IMR-90 (cell line): ENCODE measurements at regions of chr17 and their contacts with region 1.

Region 1: DNA sequence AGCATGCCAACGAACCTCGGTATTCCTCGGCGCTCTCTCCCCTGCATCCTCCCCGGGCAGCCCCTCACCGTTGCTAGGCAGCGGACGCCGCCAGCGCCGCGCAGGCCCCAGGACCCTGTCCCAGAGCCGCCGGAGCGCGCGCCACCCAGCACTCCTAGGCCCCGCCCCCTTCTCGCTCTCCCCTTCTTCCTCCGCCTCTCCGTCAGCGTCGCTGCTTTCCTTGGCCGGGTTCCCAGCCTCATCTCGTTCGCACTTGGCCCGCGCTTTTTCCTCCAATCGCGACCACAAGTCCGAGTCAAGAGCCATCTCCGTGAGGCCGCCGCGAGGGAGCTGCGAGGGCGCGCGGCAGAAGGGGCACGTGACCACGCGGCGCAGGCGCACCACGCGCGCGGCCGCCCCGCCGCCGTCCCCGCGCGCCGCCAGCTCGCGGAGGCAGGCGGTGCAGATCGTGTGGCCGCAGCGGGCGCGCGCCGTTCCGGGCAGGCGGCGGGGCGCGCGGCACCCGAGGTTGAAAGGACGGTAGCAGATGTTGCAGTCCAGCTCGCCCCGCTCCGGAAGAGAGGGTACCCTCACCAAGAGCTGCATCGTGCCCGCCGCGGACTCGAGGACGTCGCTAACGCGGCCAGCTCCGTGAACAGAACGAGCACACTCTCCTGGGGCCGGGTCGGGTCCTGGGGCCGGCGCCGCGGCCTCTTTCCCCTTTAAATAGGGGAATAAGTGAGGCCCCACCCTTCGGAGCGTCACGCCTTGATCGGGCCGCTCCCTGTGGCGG is at the start of gene RNF227:
- DNase-seq: peak; percentile 96
- ATAC-seq: peak; percentile 84
- H3K4me3 ChIP-seq: peak within 1 kb of the TSS; percentile 61
- H3K27ac ChIP-seq: peak within 1 kb of the TSS; percentile 90
- H3K4me1 ChIP-seq: peaks cover 12% of the 10 kb centered on the region
- H3K27me3 ChIP-seq: no peaks in the 10 kb centered on the region
- CTCF ChIP-seq: no peak
- POLR2A ChIP-seq: peak; percentile 71
- RAD21 ChIP-seq: no peak
- total RNA-seq, gene RNF227: 1.3 and 1.4 TPM in 2 replicates

Region 2: DNA sequence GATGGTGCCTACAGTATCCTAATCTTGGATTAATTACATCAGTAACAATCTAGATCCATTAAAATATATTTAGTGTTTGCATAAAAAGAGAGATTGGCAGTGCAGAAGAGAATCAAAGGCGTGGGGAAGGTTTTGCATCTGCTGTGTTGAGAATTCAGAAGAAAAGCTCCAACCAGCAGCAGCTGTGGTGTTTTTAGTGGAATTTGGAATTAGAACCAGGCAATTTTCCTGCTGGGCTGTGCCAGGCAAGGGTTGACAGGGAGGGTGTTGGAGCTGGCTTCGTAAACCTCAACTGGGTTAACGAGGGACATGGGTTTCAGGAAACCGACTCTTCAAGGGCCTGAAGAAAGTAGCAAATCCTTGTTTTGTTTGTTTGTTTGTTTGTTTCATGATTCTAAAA is 1953.4 kb before region 1 on chr17:
- CTCF ChIA-PET with region 1: no interaction called
- POLR2A ChIA-PET with region 1: no interaction called
- dilution Hi-C with region 1: no loop called
- in situ Hi-C with region 1: no loop called
- intact Hi-C with region 1: no loop called
- DNase-seq: no peak
- ATAC-seq: no peak
- H3K4me3 ChIP-seq: no peak overlapping the region
- H3K27ac ChIP-seq: no peak overlapping the region
- H3K4me1 ChIP-seq: no peaks in the 10 kb centered on the region
- H3K27me3 ChIP-seq: no peaks in the 10 kb centered on the region
- CTCF ChIP-seq: no peak
- POLR2A ChIP-seq: no peak
- RAD21 ChIP-seq: no peak

Region 3: GRCh38 chr17:7814969-7815368 is 100.8 kb before region 1 on chr17:
- CTCF ChIA-PET with region 1: no interaction called
- POLR2A ChIA-PET with region 1: no interaction called
- dilution Hi-C with region 1: no loop called
- in situ Hi-C with region 1: no loop called
- intact Hi-C with region 1: no loop called
- DNase-seq: no peak
- ATAC-seq: no peak
- H3K4me3 ChIP-seq: no peak overlapping the region
- H3K27ac ChIP-seq: no peak overlapping the region
- H3K4me1 ChIP-seq: no peaks in the 10 kb centered on the region
- H3K27me3 ChIP-seq: peaks cover 36% of the 10 kb centered on the region
- CTCF ChIP-seq: no peak
- POLR2A ChIP-seq: no peak
- RAD21 ChIP-seq: no peak

Region 4: GRCh38 chr17:7931709-7932482 is 16.1 kb after region 1 on chr17 and contains the starts of genes CNTROB and TRAPPC1:
- CTCF ChIA-PET with region 1: interaction called, 3 read pairs
- POLR2A ChIA-PET with region 1: interaction called, 7 read pairs
- dilution Hi-C with region 1: no loop called
- in situ Hi-C with region 1: no loop called
- intact Hi-C with region 1: loop called (anchors 1 kb)
- DNase-seq: peak; percentile 99
- ATAC-seq: peak; percentile 96
- H3K4me3 ChIP-seq: peak within 1 kb of the TSS; percentile 88
- H3K27ac ChIP-seq: peak within 1 kb of the TSS; percentile 90
- H3K4me1 ChIP-seq: peaks cover 7% of the 10 kb centered on the region; the same call in 1 of the 2 replicates
- H3K27me3 ChIP-seq: no peaks in the 10 kb centered on the region
- CTCF ChIP-seq: no peak
- POLR2A ChIP-seq: peak; percentile 77; the same call in 1 of the 2 replicates
- RAD21 ChIP-seq: no peak
- total RNA-seq, gene CNTROB: 12.5 and 12.7 TPM in 2 replicates
- total RNA-seq, gene TRAPPC1: 31.4 and 50.4 TPM in 2 replicates

Region 5: GRCh38 chr17:8041249-8041928 is 125.6 kb after region 1 on chr17:
- CTCF ChIA-PET with region 1: interaction called, 8 read pairs
- POLR2A ChIA-PET with region 1: no interaction called
- dilution Hi-C with region 1: no loop called
- in situ Hi-C with region 1: loop called (anchors 10 kb)
- intact Hi-C with region 1: loop called (anchors 1 kb)
- DNase-seq: peak; percentile 73
- ATAC-seq: peak; percentile 84
- H3K4me3 ChIP-seq: no peak overlapping the region
- H3K27ac ChIP-seq: no peak overlapping the region
- H3K4me1 ChIP-seq: no peaks in the 10 kb centered on the region
- H3K27me3 ChIP-seq: peaks cover 47% of the 10 kb centered on the region
- CTCF ChIP-seq: peak; percentile 73
- POLR2A ChIP-seq: no peak
- RAD21 ChIP-seq: peak; percentile 83